ENCODE measurements at regions of chr19 and their contacts with region 1.

Region 1: DNA sequence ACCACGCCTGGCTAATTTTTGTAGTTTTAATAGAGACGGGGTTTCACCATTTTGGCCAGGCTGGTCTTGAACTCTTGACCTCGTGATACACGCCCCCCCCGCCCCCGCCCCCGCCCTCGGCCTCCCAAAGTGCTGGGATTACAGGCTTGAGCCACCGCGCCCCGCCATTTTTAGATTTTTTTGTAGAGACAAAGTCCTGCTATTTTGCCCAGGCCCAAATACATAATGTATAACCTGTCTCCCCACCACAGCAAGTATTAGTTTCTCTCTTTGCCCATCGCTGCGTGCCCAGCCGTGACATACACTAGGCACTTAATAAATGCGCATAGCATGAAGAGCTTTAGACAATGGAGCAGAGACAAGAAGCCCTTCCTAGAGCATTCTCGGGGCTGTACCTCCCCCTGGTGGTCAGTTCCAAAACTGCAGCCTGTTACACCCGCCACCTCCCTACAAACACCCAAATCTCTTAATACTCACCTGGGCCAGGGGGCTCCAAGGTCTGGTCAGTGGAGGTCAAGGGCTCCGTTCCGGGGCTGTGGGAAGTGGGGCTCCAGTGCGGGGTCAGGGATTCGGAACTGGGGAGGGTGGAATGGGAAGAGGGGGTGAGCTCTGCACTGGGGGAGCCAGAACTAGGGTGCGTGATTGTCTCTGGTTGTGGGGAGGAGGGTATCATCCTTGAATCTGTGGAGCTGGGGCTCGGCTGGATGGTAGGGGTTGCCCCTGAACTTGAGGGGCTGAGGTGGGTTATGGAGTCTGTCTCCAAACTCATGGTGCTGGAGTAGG is 22.5 kb downstream of the IQCN start:
- DNase-seq: peak; percentile 20
- H3K4me3 ChIP-seq: no peak overlapping the region
- H3K27ac ChIP-seq: no peak overlapping the region
- H3K27me3 ChIP-seq: peaks cover 21% of the 10 kb centered on the region
- CTCF ChIP-seq: peak; percentile 92

Region 2: DNA sequence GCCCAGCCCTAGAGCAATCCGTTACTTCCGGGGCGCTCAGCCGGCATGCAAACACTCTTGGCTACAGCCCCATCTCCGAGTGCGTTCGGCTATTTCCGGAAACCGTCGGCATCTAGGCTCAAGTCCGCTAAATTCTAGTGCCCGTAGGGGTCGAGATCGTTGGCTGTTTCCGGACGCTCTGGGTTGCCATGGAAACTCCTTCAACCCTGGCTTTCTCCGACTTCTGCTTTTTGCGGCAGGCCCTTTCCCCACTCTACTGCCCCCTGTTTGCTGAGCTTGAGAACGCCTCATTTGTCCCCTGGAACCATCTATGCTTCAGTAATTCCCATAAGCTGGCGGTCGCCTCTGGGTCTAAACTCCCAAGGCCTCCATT is 99.3 kb before region 1 on chr19:
- CTCF ChIA-PET with region 1: interaction called, 11 read pairs
- POLR2A ChIA-PET with region 1: no interaction called
- DNase-seq: peak; percentile 95
- H3K4me3 ChIP-seq: peak overlapping the region; percentile 69
- H3K27ac ChIP-seq: peak overlapping the region; percentile 94
- H3K27me3 ChIP-seq: no peaks in the 10 kb centered on the region
- CTCF ChIP-seq: peak; percentile 69

Region 3: GRCh38 chr19:18183529-18183928 is 68.2 kb before region 1 on chr19:
- CTCF ChIA-PET with region 1: interaction called, 14 read pairs
- POLR2A ChIA-PET with region 1: no interaction called
- DNase-seq: no peak
- H3K4me3 ChIP-seq: no peak overlapping the region
- H3K27ac ChIP-seq: no peak overlapping the region
- H3K27me3 ChIP-seq: peaks cover 9% of the 10 kb centered on the region
- CTCF ChIP-seq: no peak

Region 4: GRCh38 chr19:18203863-18204393 is 47.9 kb before region 1 on chr19 and contains the start of gene RAB3A:
- CTCF ChIA-PET with region 1: interaction called, 56 read pairs
- POLR2A ChIA-PET with region 1: interaction called, 5 read pairs
- DNase-seq: peak; percentile 100
- H3K4me3 ChIP-seq: peak within 1 kb of the TSS; percentile 93
- H3K27ac ChIP-seq: peak within 1 kb of the TSS; percentile 100
- H3K27me3 ChIP-seq: no peaks in the 10 kb centered on the region
- CTCF ChIP-seq: no peak
- polyA plus RNA-seq, gene RAB3A: 2.8 and 6.1 TPM in 2 replicates

Region 5: GRCh38 chr19:18291590-18292461 is 40.0 kb after region 1 on chr19:
- CTCF ChIA-PET with region 1: no interaction called
- POLR2A ChIA-PET with region 1: no interaction called
- DNase-seq: no peak
- H3K4me3 ChIP-seq: peak overlapping the region; percentile 69
- H3K27ac ChIP-seq: peak overlapping the region; percentile 94
- H3K27me3 ChIP-seq: no peaks in the 10 kb centered on the region
- CTCF ChIP-seq: no peak

Region 6: GRCh38 chr19:18346091-18346490 is 94.3 kb after region 1 on chr19:
- CTCF ChIA-PET with region 1: no interaction called
- POLR2A ChIA-PET with region 1: no interaction called
- DNase-seq: no peak
- H3K4me3 ChIP-seq: no peak overlapping the region
- H3K27ac ChIP-seq: no peak overlapping the region
- H3K27me3 ChIP-seq: no peaks in the 10 kb centered on the region
- CTCF ChIP-seq: no peak

Measured in AG04450 (cell line).